CD14-positive monocyte (primary cell): ENCODE measurements at regions of chr11 and their contacts with region 1.

Region 1: GRCh38 chr11:96267496-96268032 is 75.4 kb downstream of the MAML2 start:
- DNase-seq: peak; percentile 24 to 65 (median 37)
- H3K4me3 ChIP-seq: peak overlapping the region in 2 of 3 experiments; percentile 16 to 37
- H3K4me3 Mint-ChIP-seq: peak overlapping the region; percentile 51 to 52
- H3K27ac ChIP-seq: peak overlapping the region in 1 of 2 donors; percentile 60
- H3K27ac Mint-ChIP-seq: peak overlapping the region; percentile 75 to 90 (median 80)
- H3K4me1 ChIP-seq: peaks cover 47 to 53% of the 10 kb centered on the region in 2 donors
- H3K4me1 Mint-ChIP-seq: peaks cover 58% of the 10 kb centered on the region
- H3K27me3 ChIP-seq: no peaks in the 10 kb centered on the region
- H3K27me3 Mint-ChIP-seq: peaks cover 0 to 2% (median 0%) of the 10 kb centered on the region in 3 donors
- CTCF ChIP-seq: no peak

Region 2: DNA sequence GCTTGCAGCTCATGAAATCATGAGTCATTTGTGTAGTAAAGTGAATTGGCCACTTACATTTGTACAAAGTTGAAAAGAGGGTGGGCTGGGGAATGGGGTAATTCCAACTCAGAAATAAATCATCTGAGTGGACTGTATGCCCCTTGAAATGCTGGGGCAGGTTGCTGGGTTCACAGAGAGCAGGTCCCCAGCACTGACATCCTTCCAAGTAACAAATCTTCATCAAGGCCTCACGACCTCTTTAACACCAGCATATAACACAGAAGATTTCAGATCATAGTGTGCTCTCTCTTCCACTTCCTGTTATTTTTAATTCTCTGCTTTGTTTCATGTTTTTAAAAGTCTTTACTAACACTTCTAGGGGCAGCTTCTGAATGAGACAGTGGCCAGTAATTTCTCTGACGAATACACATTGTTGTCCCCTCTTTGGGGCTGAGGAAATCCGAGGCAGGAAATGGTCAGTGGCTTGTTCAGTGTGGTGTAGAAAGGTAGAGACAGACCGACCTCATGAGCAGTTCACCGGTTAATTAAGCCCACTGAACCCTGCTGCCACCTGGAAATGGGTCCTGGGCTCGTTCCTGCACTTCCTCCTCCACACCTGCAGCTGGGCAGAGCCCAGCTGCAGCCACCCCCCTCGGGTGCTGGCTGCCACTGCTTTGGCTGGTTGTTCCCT is 52.3 kb before region 1 on chr11:
- intact Hi-C with region 1: loop called (anchors 5 to 10 kb)
- DNase-seq: peak; percentile 57 to 67 (median 58)
- H3K4me3 ChIP-seq: peak overlapping the region in 1 of 3 experiments; percentile 25
- H3K4me3 Mint-ChIP-seq: no peak overlapping the region
- H3K27ac ChIP-seq: peak overlapping the region; percentile 64 to 91
- H3K27ac Mint-ChIP-seq: peak overlapping the region; percentile 89 to 96 (median 92)
- H3K4me1 ChIP-seq: peaks cover 56 to 74% of the 10 kb centered on the region in 2 donors
- H3K4me1 Mint-ChIP-seq: peaks cover 59% of the 10 kb centered on the region
- H3K27me3 ChIP-seq: no peaks in the 10 kb centered on the region
- H3K27me3 Mint-ChIP-seq: peaks cover 0 to 3% (median 0%) of the 10 kb centered on the region in 3 donors
- CTCF ChIP-seq: no peak

Region 3: DNA sequence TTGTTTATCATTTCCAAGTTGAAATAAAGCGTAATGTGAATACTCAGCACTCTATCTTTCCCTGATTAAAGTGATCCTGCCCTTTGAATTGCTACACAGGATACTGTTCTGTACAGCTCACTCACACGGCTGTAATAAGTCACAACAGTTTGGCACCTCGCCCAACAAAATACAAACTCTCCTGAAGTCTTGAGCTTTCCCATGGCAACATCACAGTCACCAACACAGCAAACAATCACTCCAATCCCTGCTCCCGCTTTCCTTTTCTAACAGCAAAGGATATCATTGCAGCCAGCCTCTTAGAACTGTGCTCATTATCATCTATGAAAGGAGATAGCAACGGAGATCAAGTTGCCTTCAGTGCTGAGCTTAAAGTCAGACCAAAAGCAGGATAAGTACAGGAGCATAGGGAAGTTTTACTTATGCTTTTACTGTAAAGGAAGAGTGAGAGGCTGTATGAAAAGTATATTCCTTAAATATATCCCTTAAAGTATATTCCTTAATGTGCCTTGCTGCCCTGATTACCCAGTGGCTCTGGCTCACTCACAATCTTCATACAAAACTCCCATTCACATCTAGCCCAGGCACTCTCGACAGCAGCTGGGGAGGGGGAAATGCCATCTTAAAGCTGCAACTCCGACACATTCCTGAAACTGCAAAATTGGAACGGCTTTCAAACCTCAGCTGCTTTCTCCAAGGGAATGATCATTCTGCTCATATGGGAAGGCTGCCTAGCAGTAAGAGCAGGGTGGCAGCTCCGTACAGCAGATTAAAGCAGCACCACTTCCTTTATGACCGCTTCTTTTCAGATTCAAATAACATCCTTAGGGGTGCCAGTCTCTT is 39.6 kb after region 1 on chr11:
- intact Hi-C with region 1: loop called in 1 of 2 experiments (anchors 5 kb)
- DNase-seq: peak; percentile 41 to 68 (median 59)
- H3K4me3 ChIP-seq: no peak overlapping the region
- H3K4me3 Mint-ChIP-seq: no peak overlapping the region
- H3K27ac ChIP-seq: peak overlapping the region in 1 of 2 donors; percentile 21
- H3K27ac Mint-ChIP-seq: peak overlapping the region in 3 of 7 donors; percentile 19 to 68 (median 28)
- H3K4me1 ChIP-seq: peaks cover 10 to 33% of the 10 kb centered on the region in 2 donors
- H3K4me1 Mint-ChIP-seq: peaks cover 42% of the 10 kb centered on the region
- H3K27me3 ChIP-seq: no peaks in the 10 kb centered on the region
- H3K27me3 Mint-ChIP-seq: no peaks in the 10 kb centered on the region
- CTCF ChIP-seq: no peak